ENCODE measurements at regions of chr18 and their contacts with region 1.

Region 1: GRCh38 chr18:23887493-23887892 is 127.1 kb upstream of the TTC39C start:
- DNase-seq: no peak
- H3K4me3 ChIP-seq: no peak overlapping the region
- H3K4me3 Mint-ChIP-seq: no peak overlapping the region
- H3K27ac Mint-ChIP-seq: no peak overlapping the region
- H3K4me1 ChIP-seq: no peaks in the 10 kb centered on the region
- H3K4me1 Mint-ChIP-seq: no peaks in the 10 kb centered on the region
- H3K27me3 ChIP-seq: no peaks in the 10 kb centered on the region
- H3K27me3 Mint-ChIP-seq: no peaks in the 10 kb centered on the region
- CTCF ChIP-seq: no peak

Region 2: DNA sequence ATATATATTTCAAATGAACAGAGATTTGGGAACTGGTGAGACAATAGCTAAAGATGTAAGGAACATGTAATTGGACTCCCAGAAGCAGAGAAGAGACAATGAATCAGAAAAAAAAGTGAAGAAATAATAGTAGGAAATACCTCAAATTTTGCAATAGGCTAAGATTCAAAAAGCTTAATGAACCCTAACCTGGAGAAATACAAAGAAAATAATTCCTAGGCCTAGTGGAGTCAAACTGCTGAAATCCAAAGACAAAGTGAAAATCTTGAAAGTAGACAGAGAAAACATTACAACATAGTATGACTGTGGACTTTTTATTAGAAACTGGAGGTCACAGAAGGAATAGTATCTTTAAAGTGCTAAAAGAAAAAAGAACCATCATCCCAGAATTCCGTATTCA is 121.6 kb before region 1 on chr18:
- CTCF ChIA-PET with region 1: no interaction called
- POLR2A ChIA-PET with region 1: no interaction called
- intact Hi-C with region 1: no loop called
- DNase-seq: no peak
- H3K4me3 ChIP-seq: no peak overlapping the region
- H3K4me3 Mint-ChIP-seq: no peak overlapping the region
- H3K27ac Mint-ChIP-seq: no peak overlapping the region
- H3K4me1 ChIP-seq: no peaks in the 10 kb centered on the region
- H3K4me1 Mint-ChIP-seq: no peaks in the 10 kb centered on the region
- H3K27me3 ChIP-seq: no peaks in the 10 kb centered on the region
- H3K27me3 Mint-ChIP-seq: no peaks in the 10 kb centered on the region
- CTCF ChIP-seq: no peak

Region 3: GRCh38 chr18:23828426-23828825 is 59.1 kb before region 1 on chr18:
- CTCF ChIA-PET with region 1: no interaction called
- POLR2A ChIA-PET with region 1: no interaction called
- intact Hi-C with region 1: no loop called
- DNase-seq: no peak
- H3K4me3 ChIP-seq: no peak overlapping the region
- H3K4me3 Mint-ChIP-seq: no peak overlapping the region
- H3K27ac Mint-ChIP-seq: no peak overlapping the region
- H3K4me1 ChIP-seq: no peaks in the 10 kb centered on the region
- H3K4me1 Mint-ChIP-seq: no peaks in the 10 kb centered on the region
- H3K27me3 ChIP-seq: no peaks in the 10 kb centered on the region
- H3K27me3 Mint-ChIP-seq: no peaks in the 10 kb centered on the region
- CTCF ChIP-seq: no peak

Region 4: DNA sequence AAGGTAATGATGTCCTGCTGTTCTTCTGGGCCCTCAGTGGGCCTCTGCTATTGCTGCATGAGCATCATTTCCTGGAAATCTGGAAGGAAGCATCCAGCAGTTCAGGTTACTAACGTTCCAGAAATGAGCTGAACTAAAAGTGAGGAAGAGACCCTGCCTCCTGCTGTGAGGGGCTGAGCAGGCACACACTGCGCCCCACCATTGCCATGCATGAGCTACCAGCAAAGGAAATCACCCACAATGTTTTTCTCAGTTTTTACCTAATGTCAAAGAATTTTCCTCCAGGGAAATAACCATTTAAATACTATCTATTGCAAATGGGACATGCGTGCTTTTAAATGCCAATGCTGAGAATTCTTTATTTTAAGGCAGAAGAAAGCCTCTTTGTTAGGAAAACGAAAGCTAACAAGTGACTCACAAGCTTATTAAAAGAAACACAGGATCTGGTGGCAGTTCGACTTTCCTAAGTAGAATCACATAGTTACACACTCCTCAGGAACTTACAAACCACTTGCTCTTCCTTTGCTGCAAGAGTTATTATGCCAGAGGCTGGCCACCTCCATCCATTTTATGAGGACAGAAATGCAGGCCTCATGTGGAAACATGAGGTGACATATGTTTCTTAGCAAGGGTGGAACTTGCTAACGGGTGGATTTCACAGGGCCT is 25.6 kb before region 1 on chr18:
- CTCF ChIA-PET with region 1: no interaction called
- POLR2A ChIA-PET with region 1: no interaction called
- intact Hi-C with region 1: no loop called
- DNase-seq: no peak
- H3K4me3 ChIP-seq: no peak overlapping the region
- H3K4me3 Mint-ChIP-seq: no peak overlapping the region
- H3K27ac Mint-ChIP-seq: no peak overlapping the region
- H3K4me1 ChIP-seq: no peaks in the 10 kb centered on the region
- H3K4me1 Mint-ChIP-seq: no peaks in the 10 kb centered on the region
- H3K27me3 ChIP-seq: no peaks in the 10 kb centered on the region
- H3K27me3 Mint-ChIP-seq: no peaks in the 10 kb centered on the region
- CTCF ChIP-seq: no peak

Region 5: DNA sequence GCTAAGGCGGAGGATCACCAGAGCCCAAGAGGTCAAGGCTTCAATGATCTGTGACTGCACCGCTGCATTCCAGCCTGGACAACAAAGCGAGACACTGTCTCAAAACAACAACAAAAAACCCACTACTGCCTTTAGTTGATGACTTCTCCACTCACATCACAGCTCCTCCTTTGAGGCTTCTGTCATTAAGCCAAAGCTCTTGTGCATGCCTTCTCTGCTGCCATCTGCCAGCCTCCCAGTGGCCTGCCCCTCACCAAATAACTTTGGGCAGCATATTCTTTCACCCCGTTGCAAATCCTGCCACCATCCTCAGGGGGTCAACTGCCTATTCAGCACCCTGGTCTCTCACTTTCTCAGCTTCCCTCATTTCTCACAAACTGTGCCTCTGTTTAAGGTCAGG is 482.6 kb after region 1 on chr18:
- CTCF ChIA-PET with region 1: no interaction called
- POLR2A ChIA-PET with region 1: interaction called, 10 read pairs
- intact Hi-C with region 1: no loop called
- DNase-seq: no peak
- H3K4me3 ChIP-seq: no peak overlapping the region
- H3K4me3 Mint-ChIP-seq: no peak overlapping the region
- H3K27ac Mint-ChIP-seq: no peak overlapping the region
- H3K4me1 ChIP-seq: no peaks in the 10 kb centered on the region
- H3K4me1 Mint-ChIP-seq: no peaks in the 10 kb centered on the region
- H3K27me3 ChIP-seq: no peaks in the 10 kb centered on the region
- H3K27me3 Mint-ChIP-seq: no peaks in the 10 kb centered on the region
- CTCF ChIP-seq: no peak

Measured in Caco-2 (cell line).